ENCODE measurements at regions of chr11 and their contacts with region 1.

Region 1: GRCh38 chr11:19561011-19561410 is 151.6 kb upstream of the NAV2 start:
- DNase-seq: no peak
- ATAC-seq: no peak
- H3K4me3 ChIP-seq: no peak overlapping the region
- H3K27ac ChIP-seq: no peak overlapping the region
- H3K4me1 ChIP-seq: no peaks in the 10 kb centered on the region
- H3K27me3 ChIP-seq: peaks cover 0 to 28% of the 10 kb centered on the region in 2 experiments; a peak in 3 of 5 replicates
- CTCF ChIP-seq: no peak
- EP300 ChIP-seq: no peak
- POLR2A ChIP-seq: no peak
- RAD21 ChIP-seq: no peak

Region 2: GRCh38 chr11:19499026-19499669 is 61.9 kb before region 1 on chr11:
- CTCF ChIA-PET with region 1: no interaction called
- POLR2A ChIA-PET with region 1: no interaction called
- in situ Hi-C with region 1: no loop called
- intact Hi-C with region 1: no loop called
- DNase-seq: no peak
- ATAC-seq: no peak
- H3K4me3 ChIP-seq: no peak overlapping the region
- H3K27ac ChIP-seq: no peak overlapping the region
- H3K4me1 ChIP-seq: no peaks in the 10 kb centered on the region
- H3K27me3 ChIP-seq: peaks cover 0 to 2% of the 10 kb centered on the region in 2 experiments; a peak in 1 of 5 replicates
- CTCF ChIP-seq: no peak
- EP300 ChIP-seq: no peak
- POLR2A ChIP-seq: no peak
- RAD21 ChIP-seq: no peak

Region 3: GRCh38 chr11:19577976-19578619 is 17.1 kb after region 1 on chr11:
- CTCF ChIA-PET with region 1: no interaction called
- POLR2A ChIA-PET with region 1: no interaction called
- in situ Hi-C with region 1: no loop called
- intact Hi-C with region 1: no loop called
- DNase-seq: no peak
- ATAC-seq: no peak
- H3K4me3 ChIP-seq: no peak overlapping the region
- H3K27ac ChIP-seq: no peak overlapping the region
- H3K4me1 ChIP-seq: no peaks in the 10 kb centered on the region
- H3K27me3 ChIP-seq: peaks cover 1 to 4% of the 10 kb centered on the region in 2 experiments; a peak in 1 of 5 replicates
- CTCF ChIP-seq: no peak
- EP300 ChIP-seq: no peak
- POLR2A ChIP-seq: no peak
- RAD21 ChIP-seq: no peak

Region 4: GRCh38 chr11:19742588-19743292 is 181.7 kb after region 1 on chr11:
- CTCF ChIA-PET with region 1: interaction called, 35 read pairs
- POLR2A ChIA-PET with region 1: no interaction called
- in situ Hi-C with region 1: loop called (anchors 5 kb)
- intact Hi-C with region 1: loop called (anchors 1 kb)
- DNase-seq: peak; percentile 52
- ATAC-seq: peak; percentile 95
- H3K4me3 ChIP-seq: no peak overlapping the region
- H3K27ac ChIP-seq: no peak overlapping the region
- H3K4me1 ChIP-seq: no peaks in the 10 kb centered on the region
- H3K27me3 ChIP-seq: peaks cover 0 to 20% of the 10 kb centered on the region in 2 experiments; a peak in 3 of 5 replicates
- CTCF ChIP-seq: peak; percentile 89
- EP300 ChIP-seq: no peak
- POLR2A ChIP-seq: no peak
- RAD21 ChIP-seq: peak; percentile 74